PC-3 (cell line): ENCODE measurements at regions of chr1 and their contacts with region 1.

Region 1: DNA sequence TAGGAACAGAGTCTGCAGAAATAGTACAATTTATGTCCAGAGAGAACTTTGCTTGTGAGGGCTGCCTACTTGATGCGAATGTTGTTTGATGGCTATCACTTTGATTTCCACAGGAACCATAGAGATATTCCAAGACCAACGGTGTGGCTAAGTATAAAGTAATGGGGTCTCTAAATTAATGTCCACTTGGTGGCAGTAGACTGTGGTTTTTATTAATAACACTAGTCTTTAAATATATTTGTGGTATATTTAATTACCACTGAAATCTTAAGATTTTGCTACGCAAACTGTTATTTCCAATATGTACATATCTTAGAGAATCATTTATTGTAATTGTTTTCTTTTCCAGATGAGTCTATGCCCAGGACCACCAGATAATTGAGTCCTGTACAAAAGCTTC is 647.9 kb downstream of the PLA2G4A start:
- DNase-seq: peak; percentile 40
- ATAC-seq: peak; percentile 56
- H3K4me3 ChIP-seq: no peak overlapping the region
- H3K27ac ChIP-seq: no peak overlapping the region
- H3K4me1 ChIP-seq: no peaks in the 10 kb centered on the region; the same call in 1 of the 2 replicates
- H3K27me3 ChIP-seq: no peaks in the 10 kb centered on the region
- CTCF ChIP-seq: peak; percentile 68

Region 2: GRCh38 chr1:187264995-187265602 is 211.6 kb before region 1 on chr1:
- CTCF ChIA-PET with region 1: no interaction called
- POLR2A ChIA-PET with region 1: no interaction called
- intact Hi-C with region 1: loop called (anchors 5 kb)
- DNase-seq: peak; percentile 68
- ATAC-seq: peak; percentile 76
- H3K4me3 ChIP-seq: no peak overlapping the region
- H3K27ac ChIP-seq: no peak overlapping the region
- H3K4me1 ChIP-seq: no peaks in the 10 kb centered on the region
- H3K27me3 ChIP-seq: no peaks in the 10 kb centered on the region
- CTCF ChIP-seq: peak; percentile 66

Region 3: GRCh38 chr1:187408212-187409003 is 68.3 kb before region 1 on chr1:
- CTCF ChIA-PET with region 1: no interaction called
- POLR2A ChIA-PET with region 1: no interaction called
- intact Hi-C with region 1: no loop called
- DNase-seq: no peak
- ATAC-seq: no peak
- H3K4me3 ChIP-seq: no peak overlapping the region
- H3K27ac ChIP-seq: no peak overlapping the region
- H3K4me1 ChIP-seq: no peaks in the 10 kb centered on the region
- H3K27me3 ChIP-seq: no peaks in the 10 kb centered on the region
- CTCF ChIP-seq: no peak

Region 4: GRCh38 chr1:187655175-187655574 is 178.5 kb after region 1 on chr1:
- CTCF ChIA-PET with region 1: no interaction called
- POLR2A ChIA-PET with region 1: no interaction called
- intact Hi-C with region 1: loop called (anchors 10 kb)
- DNase-seq: peak; percentile 62
- ATAC-seq: peak; percentile 70
- H3K4me3 ChIP-seq: no peak overlapping the region
- H3K27ac ChIP-seq: peak overlapping the region; percentile 19; the same call in 1 of the 2 replicates
- H3K4me1 ChIP-seq: peaks cover 5% of the 10 kb centered on the region; the same call in 1 of the 2 replicates
- H3K27me3 ChIP-seq: no peaks in the 10 kb centered on the region
- CTCF ChIP-seq: no peak

Region 5: DNA sequence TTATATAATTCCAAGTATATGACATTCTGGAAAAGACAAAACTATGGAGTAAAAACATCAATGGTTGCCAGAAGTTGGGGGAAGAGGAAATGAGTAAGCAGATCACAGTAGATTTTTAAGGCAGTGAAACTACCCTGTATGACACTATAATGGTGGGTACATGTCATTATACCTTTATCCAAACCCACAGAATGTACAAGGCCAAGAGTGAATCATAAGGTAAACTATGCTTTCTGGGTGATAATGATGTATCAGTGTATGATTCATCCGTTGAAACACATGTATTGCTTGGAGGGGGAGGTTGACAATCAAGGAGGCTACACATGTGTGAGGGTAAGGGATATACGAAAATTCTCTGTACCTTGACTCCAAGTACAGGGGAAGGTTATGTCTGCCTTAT is 214.8 kb after region 1 on chr1:
- CTCF ChIA-PET with region 1: no interaction called
- POLR2A ChIA-PET with region 1: no interaction called
- intact Hi-C with region 1: loop called (anchors 5 kb)
- DNase-seq: peak; percentile 88
- ATAC-seq: peak; percentile 87
- H3K4me3 ChIP-seq: no peak overlapping the region
- H3K27ac ChIP-seq: peak overlapping the region; percentile 72
- H3K4me1 ChIP-seq: peaks cover 49% of the 10 kb centered on the region
- H3K27me3 ChIP-seq: no peaks in the 10 kb centered on the region
- CTCF ChIP-seq: no peak

Region 6: DNA sequence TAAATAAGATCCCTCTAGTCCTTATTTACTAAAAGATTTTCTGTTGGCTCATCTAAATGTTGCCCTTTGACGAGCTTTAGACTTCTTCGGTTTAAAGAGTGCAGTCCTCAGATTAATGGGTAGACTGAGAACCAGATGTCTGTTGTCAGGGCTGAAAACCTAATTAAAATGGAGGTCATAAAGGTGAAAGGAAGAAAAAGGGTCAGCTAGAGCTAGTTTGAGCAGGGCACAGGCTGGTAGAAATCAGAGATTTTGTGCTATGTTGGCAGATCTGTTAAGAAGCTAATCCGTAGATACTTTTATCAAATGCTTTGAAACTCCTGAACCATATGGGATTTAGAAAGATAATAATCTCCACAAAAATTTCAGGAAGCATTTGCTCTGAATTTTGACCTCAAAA is 311.1 kb after region 1 on chr1:
- CTCF ChIA-PET with region 1: no interaction called
- POLR2A ChIA-PET with region 1: no interaction called
- intact Hi-C with region 1: loop called (anchors 5 kb)
- DNase-seq: no peak
- ATAC-seq: no peak
- H3K4me3 ChIP-seq: no peak overlapping the region
- H3K27ac ChIP-seq: no peak overlapping the region
- H3K4me1 ChIP-seq: no peaks in the 10 kb centered on the region
- H3K27me3 ChIP-seq: no peaks in the 10 kb centered on the region
- CTCF ChIP-seq: no peak

Region 7: GRCh38 chr1:187999973-188000372 is 523.3 kb after region 1 on chr1:
- CTCF ChIA-PET with region 1: no interaction called
- POLR2A ChIA-PET with region 1: no interaction called
- intact Hi-C with region 1: loop called (anchors 2 kb)
- DNase-seq: peak; percentile 11
- ATAC-seq: peak; percentile 40; the same call in 1 of the 2 replicates
- H3K4me3 ChIP-seq: no peak overlapping the region
- H3K27ac ChIP-seq: no peak overlapping the region
- H3K4me1 ChIP-seq: no peaks in the 10 kb centered on the region
- H3K27me3 ChIP-seq: no peaks in the 10 kb centered on the region
- CTCF ChIP-seq: peak; percentile 39; the same call in 1 of the 2 replicates

Region 8: DNA sequence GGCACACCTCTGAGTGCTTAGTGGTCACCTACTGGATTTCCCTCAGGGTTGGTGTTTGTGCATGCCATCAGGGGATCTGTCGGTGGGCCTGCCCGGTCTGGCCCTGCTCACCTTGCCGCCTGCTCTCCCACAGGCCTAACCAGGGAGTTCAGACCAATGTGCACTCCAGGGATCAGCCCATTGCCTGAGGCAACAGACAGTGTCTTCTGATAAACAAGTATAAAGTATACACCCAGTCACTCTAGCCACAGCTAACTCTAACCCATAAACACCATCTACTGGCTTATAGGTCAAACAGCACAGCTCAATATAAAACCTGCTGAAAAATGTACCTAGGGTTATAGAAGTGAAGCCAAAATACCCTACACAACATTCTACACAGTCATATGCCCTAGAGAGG is 652.1 kb after region 1 on chr1:
- CTCF ChIA-PET with region 1: no interaction called
- POLR2A ChIA-PET with region 1: no interaction called
- intact Hi-C with region 1: loop called (anchors 2 kb)
- DNase-seq: peak; percentile 59
- ATAC-seq: peak; percentile 87
- H3K4me3 ChIP-seq: no peak overlapping the region
- H3K27ac ChIP-seq: no peak overlapping the region
- H3K4me1 ChIP-seq: peaks cover 18% of the 10 kb centered on the region
- H3K27me3 ChIP-seq: no peaks in the 10 kb centered on the region
- CTCF ChIP-seq: peak; percentile 61